A549 (cell line): ENCODE measurements at regions of chr1 and their contacts with region 1.

Region 1: DNA sequence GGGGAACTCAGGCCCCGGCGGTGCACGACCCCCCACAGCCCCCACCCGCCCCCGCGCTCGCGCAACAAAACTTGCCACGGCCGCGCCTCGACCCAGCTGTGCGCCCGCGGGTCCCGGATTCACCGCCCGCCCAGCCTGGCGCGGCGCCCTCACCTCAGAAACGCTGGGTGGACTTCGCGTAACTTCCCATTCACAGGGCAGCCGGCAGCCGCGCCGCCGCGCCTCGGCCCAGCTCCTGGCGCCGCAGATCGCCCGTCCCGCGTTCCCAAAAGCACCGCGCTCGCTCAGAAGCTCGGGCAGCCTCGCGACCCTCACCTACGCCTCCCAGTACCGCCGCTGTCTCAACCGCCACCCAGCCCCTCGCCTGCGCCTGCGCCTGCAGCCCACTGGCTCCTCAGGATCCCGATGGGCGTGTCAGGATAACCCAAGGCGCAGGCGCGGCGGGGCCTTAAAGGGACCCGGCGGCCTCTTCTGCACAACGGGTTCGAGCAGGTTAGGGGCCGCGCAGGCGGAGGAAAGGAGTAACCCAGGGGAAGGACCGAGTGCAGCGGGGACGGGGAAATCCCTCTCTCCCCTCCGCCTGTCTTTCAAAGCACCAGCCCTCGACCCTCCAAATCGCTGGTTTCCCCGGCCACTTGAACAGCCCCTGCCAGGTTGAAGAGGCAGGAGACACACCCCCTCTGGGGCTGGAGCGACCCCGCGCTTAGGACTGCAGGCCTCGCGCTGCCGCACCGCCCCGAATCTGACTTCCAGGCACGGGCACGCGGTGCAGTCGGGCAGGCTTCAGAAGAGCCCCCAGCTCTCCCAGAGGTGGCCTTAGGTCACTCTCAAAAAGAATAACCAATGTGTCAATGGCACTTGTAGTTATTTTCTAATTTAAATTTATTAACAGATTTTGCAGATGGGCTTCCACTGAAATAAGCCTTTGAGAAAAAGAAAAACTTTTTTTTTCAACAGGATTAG is at the start of gene NBPF1:
- DNase-seq: peak; percentile 96 to 100
- ATAC-seq: peak; percentile 96 to 99
- H3K4me3 ChIP-seq: peak within 1 kb of the TSS; percentile 70
- H3K27ac ChIP-seq: peak within 1 kb of the TSS; percentile 79 to 84
- H3K4me1 ChIP-seq: peaks cover 15% of the 10 kb centered on the region
- CTCF ChIP-seq: peak; percentile 19; the same call in 1 of the 3 replicates
- EP300 ChIP-seq: no peak
- POLR2A ChIP-seq: peak; percentile 98
- RAD21 ChIP-seq: peak in 1 of 2 experiments; percentile 30; a peak in 2 of 5 replicates
- polyA plus RNA-seq, gene NBPF1: 36.8 and 37.0 TPM in 2 replicates

Region 2: DNA sequence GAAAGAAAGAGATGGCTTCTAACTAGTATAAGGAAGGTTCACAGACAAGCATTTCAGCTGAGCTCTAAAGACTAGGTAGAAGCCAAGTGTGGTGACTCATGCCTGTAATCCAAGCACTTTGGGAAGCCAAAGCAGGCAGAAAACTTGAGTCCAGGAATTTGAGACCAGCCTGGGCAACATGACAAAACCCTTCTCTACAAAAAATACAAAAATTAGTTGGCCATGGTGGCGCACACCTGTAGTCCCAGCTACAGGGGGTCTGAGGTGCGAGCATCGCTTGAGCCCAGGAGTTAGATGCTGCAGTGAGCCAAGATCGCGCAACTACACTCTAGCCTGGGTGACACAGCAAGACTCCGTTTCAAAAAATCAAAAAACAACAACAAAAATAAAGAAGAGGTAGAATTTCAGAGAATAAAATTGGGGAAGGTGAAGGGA is 289.0 kb before region 1 on chr1:
- CTCF ChIA-PET with region 1: no interaction called
- POLR2A ChIA-PET with region 1: no interaction called
- DNase-seq: no peak
- ATAC-seq: peak in 1 of 2 experiments; percentile 63; a peak in 3 of 6 replicates
- H3K4me3 ChIP-seq: no peak overlapping the region
- H3K27ac ChIP-seq: peak overlapping the region in 1 of 2 experiments; percentile 54; a peak in 2 of 6 replicates
- H3K4me1 ChIP-seq: peaks cover 9% of the 10 kb centered on the region; the same call in 2 of the 3 replicates
- CTCF ChIP-seq: no peak
- EP300 ChIP-seq: no peak
- POLR2A ChIP-seq: no peak
- RAD21 ChIP-seq: no peak

Region 3: GRCh38 chr1:16946646-16947045 is 333.2 kb after region 1 on chr1:
- CTCF ChIA-PET with region 1: interaction called, 14 read pairs
- POLR2A ChIA-PET with region 1: interaction called, 5 read pairs
- DNase-seq: no peak
- ATAC-seq: no peak
- H3K4me3 ChIP-seq: no peak overlapping the region
- H3K27ac ChIP-seq: no peak overlapping the region
- H3K4me1 ChIP-seq: no peaks in the 10 kb centered on the region
- CTCF ChIP-seq: no peak
- EP300 ChIP-seq: no peak
- POLR2A ChIP-seq: no peak
- RAD21 ChIP-seq: no peak